ENCODE measurements at regions of chr6 and their contacts with region 1.

Region 1: GRCh38 chr6:40986364-40986763 is 52.7 kb downstream of the UNC5CL start:
- DNase-seq: no peak
- ATAC-seq: peak; percentile 58; the same call in 1 of the 2 replicates
- H3K4me3 ChIP-seq: no peak overlapping the region
- H3K27ac ChIP-seq: peak overlapping the region; percentile 98
- H3K4me1 ChIP-seq: peaks cover 14% of the 10 kb centered on the region
- H3K27me3 ChIP-seq: no peaks in the 10 kb centered on the region
- CTCF ChIP-seq: no peak

Region 2: GRCh38 chr6:41061196-41061726 is 74.9 kb after region 1 on chr6:
- CTCF ChIA-PET with region 1: no interaction called
- POLR2A ChIA-PET with region 1: interaction called, 14 read pairs
- in situ Hi-C with region 1: no loop called
- intact Hi-C with region 1: no loop called
- DNase-seq: no peak
- ATAC-seq: no peak
- H3K4me3 ChIP-seq: no peak overlapping the region
- H3K27ac ChIP-seq: no peak overlapping the region
- H3K4me1 ChIP-seq: no peaks in the 10 kb centered on the region
- H3K27me3 ChIP-seq: no peaks in the 10 kb centered on the region
- CTCF ChIP-seq: no peak

Region 3: GRCh38 chr6:41209547-41210320 is 223.4 kb after region 1 on chr6:
- CTCF ChIA-PET with region 1: no interaction called
- POLR2A ChIA-PET with region 1: no interaction called
- in situ Hi-C with region 1: no loop called
- intact Hi-C with region 1: no loop called
- DNase-seq: no peak
- ATAC-seq: no peak
- H3K4me3 ChIP-seq: no peak overlapping the region
- H3K27ac ChIP-seq: no peak overlapping the region
- H3K4me1 ChIP-seq: no peaks in the 10 kb centered on the region
- H3K27me3 ChIP-seq: peaks cover 13% of the 10 kb centered on the region
- CTCF ChIP-seq: no peak